Heart right ventricle (tissue), 16 donors: ENCODE measurements at regions of chr10 and their contacts with region 1.

Region 1: DNA sequence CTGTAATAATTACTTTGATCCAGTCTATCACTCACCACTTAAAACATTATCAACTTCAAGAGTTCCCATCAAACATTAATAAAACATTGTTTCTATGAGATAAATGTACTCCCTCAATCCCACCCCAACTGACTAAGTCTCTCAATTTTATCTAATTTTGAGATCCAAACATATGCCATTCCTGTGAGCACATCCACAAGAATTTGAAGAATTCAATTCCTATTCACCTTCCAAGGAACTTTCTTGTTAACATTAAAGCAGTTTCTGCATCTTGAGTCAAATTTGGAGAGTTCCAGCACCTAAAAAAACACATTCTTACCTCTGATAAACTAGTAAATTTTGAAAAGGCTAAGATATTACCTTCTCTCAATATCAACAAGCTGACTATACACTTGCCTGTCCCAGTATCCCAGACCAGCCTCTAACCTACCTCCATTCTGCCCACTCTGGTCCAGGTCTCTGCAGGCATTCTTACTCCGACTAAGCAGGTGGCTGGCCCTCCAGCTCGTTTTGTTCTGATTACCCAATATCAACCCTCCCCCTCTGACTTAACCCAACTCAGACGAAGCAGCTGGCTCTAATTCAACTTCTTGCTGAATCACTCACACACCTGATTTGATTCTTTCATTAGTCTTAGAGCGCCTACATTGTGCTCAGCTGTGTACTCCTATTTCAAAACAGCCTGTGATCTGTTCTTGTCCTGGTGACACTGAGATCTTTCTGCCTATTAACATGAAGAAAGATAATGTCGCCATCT is 275.2 kb downstream of the IPMK start:
- DNase-seq: no peak
- ATAC-seq: peak in 3 of 8 donors; percentile 25 to 54 (median 26)
- H3K4me3 ChIP-seq: no peak overlapping the region
- H3K27ac ChIP-seq: no peak overlapping the region
- H3K4me1 ChIP-seq: no peaks in the 10 kb centered on the region
- H3K27me3 ChIP-seq: no peaks in the 10 kb centered on the region
- CTCF ChIP-seq: no peak

Region 2: GRCh38 chr10:57716886-57717285 is 275.6 kb before region 1 on chr10:
- intact Hi-C with region 1: loop called in 1 of 10 experiments (anchors 5 kb)
- DNase-seq: no peak
- ATAC-seq: no peak
- H3K4me3 ChIP-seq: no peak overlapping the region
- H3K27ac ChIP-seq: no peak overlapping the region
- H3K4me1 ChIP-seq: no peaks in the 10 kb centered on the region
- H3K27me3 ChIP-seq: no peaks in the 10 kb centered on the region
- CTCF ChIP-seq: peak in 7 of 9 donors; percentile 22 to 55 (median 42)